ENCODE measurements at regions of chr1 and their contacts with region 1.

Region 1: GRCh38 chr1:6235296-6235677 is 477 bp downstream of the ICMT start:
- H3K4me3 Mint-ChIP-seq: peak overlapping the region; percentile 87
- H3K27ac Mint-ChIP-seq: peak overlapping the region; percentile 86
- H3K4me1 Mint-ChIP-seq: peaks cover 31% of the 10 kb centered on the region
- H3K27me3 Mint-ChIP-seq: peaks cover 29% of the 10 kb centered on the region

Region 2: GRCh38 chr1:6199298-6200187 is 35.7 kb before region 1 on chr1 and contains the start of gene RPL22:
- intact Hi-C with region 1: loop called (anchors 5 kb)
- H3K4me3 Mint-ChIP-seq: peak within 1 kb of the TSS; percentile 79
- H3K27ac Mint-ChIP-seq: peak within 1 kb of the TSS; percentile 95
- H3K4me1 Mint-ChIP-seq: peaks cover 33% of the 10 kb centered on the region
- H3K27me3 Mint-ChIP-seq: peaks cover 24% of the 10 kb centered on the region

Region 3: DNA sequence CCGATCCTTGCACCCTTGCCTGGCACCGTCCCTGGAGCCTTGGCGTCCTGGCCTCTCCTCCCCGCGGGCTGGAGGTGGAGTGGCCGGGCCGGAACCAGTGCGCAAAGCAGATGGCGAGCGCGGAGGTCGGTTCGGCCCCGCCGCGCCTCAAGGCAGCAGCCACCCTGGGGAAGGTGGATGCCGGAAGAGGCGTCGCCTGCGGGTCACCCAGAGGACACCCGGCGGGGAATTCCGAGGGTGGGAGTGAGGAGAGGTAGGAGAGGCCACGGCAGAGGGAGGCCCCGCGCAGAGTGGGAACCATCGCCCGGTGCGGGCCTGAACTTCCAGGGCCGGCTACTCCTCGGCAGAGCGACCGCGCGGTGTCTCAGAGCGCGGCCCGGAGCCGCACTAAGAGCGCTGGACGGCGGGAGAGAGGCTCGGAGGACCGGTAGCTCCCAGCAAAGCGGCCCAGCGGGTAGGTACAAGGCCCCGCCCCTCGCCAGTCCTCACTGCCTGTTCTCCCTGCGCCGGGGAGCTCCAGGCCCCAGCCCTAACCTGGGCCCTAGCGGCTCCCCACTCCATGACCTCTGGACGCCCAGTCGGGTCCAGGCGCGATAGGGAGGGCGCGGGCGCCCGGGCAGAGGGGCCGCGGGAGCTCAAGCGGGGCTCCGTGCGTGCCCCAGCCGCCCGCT is 29.3 kb before region 1 on chr1 and contains the start of gene RNF207:
- intact Hi-C with region 1: loop called (anchors 5 kb)
- H3K4me3 Mint-ChIP-seq: peak within 1 kb of the TSS; percentile 76
- H3K27ac Mint-ChIP-seq: no peak within 1 kb of the TSS
- H3K4me1 Mint-ChIP-seq: peaks cover 29% of the 10 kb centered on the region
- H3K27me3 Mint-ChIP-seq: peaks cover 84% of the 10 kb centered on the region

Measured in dendritic cell treated with granulocyte-macrophage colony-stimulating factor and Interleukin-4, amounts not matched to agents 40 ng/mL and 50 ng/mL, for 4 days (primary cell).